ENCODE measurements at regions of chr18 and their contacts with region 1.

Region 1: GRCh38 chr18:23231340-23232021 is 96.2 kb downstream of the CABLES1 start:
- DNase-seq: peak; percentile 58
- ATAC-seq: peak; percentile 75
- H3K4me3 Mint-ChIP-seq: peak overlapping the region; percentile 76
- H3K27ac Mint-ChIP-seq: peak overlapping the region; percentile 97
- H3K4me1 Mint-ChIP-seq: peaks cover 74% of the 10 kb centered on the region
- H3K27me3 Mint-ChIP-seq: no peaks in the 10 kb centered on the region
- CTCF ChIP-seq: no peak

Region 2: DNA sequence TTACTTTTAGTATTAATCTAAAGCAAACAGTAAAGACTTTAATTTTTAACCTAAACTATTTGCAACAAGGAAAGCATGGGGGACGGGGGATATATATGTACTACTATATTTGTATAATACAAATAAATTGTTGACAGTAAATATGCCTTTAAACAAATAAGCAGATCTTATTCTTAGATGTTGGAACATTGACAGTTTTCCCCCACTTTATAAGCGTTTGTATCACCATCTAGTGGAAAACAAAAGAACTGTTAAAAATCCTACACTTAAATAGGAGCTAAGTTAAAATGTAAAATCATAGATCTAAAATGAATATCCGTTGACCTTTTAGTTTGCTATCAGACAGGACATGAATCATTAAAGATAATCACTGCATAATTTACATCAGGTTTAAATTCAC is 248.3 kb before region 1 on chr18:
- CTCF ChIA-PET with region 1: no interaction called
- POLR2A ChIA-PET with region 1: no interaction called
- intact Hi-C with region 1: loop called (anchors 5 kb)
- DNase-seq: no peak
- ATAC-seq: no peak
- H3K4me3 Mint-ChIP-seq: no peak overlapping the region
- H3K27ac Mint-ChIP-seq: no peak overlapping the region
- H3K4me1 Mint-ChIP-seq: peaks cover 34% of the 10 kb centered on the region
- H3K27me3 Mint-ChIP-seq: no peaks in the 10 kb centered on the region
- CTCF ChIP-seq: no peak

Region 3: GRCh38 chr18:23243178-23243577 is 11.7 kb after region 1 on chr18:
- CTCF ChIA-PET with region 1: interaction called, 5 read pairs
- POLR2A ChIA-PET with region 1: interaction called, 27 read pairs
- intact Hi-C with region 1: loop called (anchors 1 kb)
- DNase-seq: no peak
- ATAC-seq: no peak
- H3K4me3 Mint-ChIP-seq: no peak overlapping the region
- H3K27ac Mint-ChIP-seq: no peak overlapping the region
- H3K4me1 Mint-ChIP-seq: peaks cover 34% of the 10 kb centered on the region
- H3K27me3 Mint-ChIP-seq: no peaks in the 10 kb centered on the region
- CTCF ChIP-seq: no peak

Region 4: DNA sequence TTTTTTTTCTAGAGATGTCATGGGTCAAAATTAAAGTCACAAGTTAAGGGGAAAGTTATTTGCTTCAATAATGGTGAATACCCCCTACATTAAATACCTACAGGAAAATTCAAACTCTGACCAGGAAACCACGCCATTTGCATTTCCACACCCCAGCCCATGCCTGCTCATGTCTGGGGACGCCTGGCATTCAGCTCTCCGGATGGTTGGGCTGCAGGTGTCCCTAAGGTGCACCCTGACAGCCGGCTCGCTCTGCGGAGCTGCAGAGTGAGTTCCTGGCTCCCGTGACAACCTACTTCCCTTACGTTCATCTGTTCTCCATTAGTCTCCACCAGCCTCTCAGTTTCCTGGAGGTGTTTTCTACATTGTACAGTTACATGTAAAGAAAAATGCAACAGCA is 98.9 kb after region 1 on chr18:
- CTCF ChIA-PET with region 1: no interaction called
- POLR2A ChIA-PET with region 1: no interaction called
- intact Hi-C with region 1: loop called (anchors 1 kb)
- DNase-seq: peak; percentile 29
- ATAC-seq: peak; percentile 96
- H3K4me3 Mint-ChIP-seq: peak overlapping the region; percentile 47
- H3K27ac Mint-ChIP-seq: peak overlapping the region; percentile 50
- H3K4me1 Mint-ChIP-seq: peaks cover 28% of the 10 kb centered on the region
- H3K27me3 Mint-ChIP-seq: no peaks in the 10 kb centered on the region
- CTCF ChIP-seq: no peak

Region 5: GRCh38 chr18:23377669-23378301 is 146.3 kb after region 1 on chr18:
- CTCF ChIA-PET with region 1: no interaction called
- POLR2A ChIA-PET with region 1: no interaction called
- intact Hi-C with region 1: loop called (anchors 5 kb)
- DNase-seq: no peak
- ATAC-seq: peak; percentile 50
- H3K4me3 Mint-ChIP-seq: no peak overlapping the region
- H3K27ac Mint-ChIP-seq: no peak overlapping the region
- H3K4me1 Mint-ChIP-seq: peaks cover 8% of the 10 kb centered on the region
- H3K27me3 Mint-ChIP-seq: no peaks in the 10 kb centered on the region
- CTCF ChIP-seq: no peak

Region 6: DNA sequence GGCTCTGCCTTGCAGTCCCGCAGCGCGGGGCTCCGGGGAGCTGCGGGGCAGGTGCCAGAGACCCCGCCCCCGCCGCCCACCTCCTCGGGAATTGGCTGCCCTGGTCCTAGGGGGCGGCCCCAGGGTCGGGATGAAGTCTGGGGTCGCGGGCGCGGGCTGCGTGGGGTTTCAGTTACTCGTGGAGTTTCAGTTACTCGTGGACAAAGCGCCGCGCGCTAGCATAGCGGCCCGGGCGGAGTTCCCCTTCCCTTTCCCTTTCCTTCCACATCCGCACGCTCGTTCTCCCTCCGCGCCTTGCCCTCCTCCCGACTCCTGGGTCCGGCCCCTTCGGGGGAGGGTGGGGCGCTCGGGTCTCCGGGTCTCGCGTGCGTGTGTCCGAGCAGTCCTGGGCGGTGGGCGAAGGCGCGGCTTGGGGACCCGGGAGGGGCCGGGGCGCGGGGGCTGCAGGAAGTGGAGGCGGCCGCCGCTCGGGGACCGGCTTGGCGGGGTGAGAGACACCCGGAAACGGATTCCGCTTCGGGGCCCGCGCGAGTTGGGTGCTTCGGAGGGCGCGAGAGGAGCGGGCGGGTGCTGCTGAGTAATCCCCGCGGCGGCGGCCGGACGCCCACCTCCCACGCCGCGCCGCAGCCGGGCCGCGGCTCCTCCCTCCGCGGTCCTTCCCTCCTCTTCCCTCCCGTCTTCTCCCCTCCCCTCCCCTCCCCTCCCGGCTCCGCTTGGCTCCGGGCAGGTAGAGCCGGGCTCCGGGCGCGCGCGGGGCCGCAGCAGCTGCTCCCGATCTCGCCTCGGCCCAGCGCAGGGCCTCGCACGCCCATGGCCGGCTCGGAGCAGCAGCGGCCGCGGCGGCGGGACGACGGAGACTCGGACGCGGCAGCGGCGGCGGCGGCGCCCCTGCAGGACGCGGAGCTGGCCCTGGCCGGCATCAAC is 782.8 kb after region 1 on chr18 and contains the start of gene TTC39C:
- CTCF ChIA-PET with region 1: no interaction called
- POLR2A ChIA-PET with region 1: interaction called, 3 read pairs
- intact Hi-C with region 1: loop called (anchors 5 kb)
- DNase-seq: peak; percentile 76
- ATAC-seq: peak; percentile 66
- H3K4me3 Mint-ChIP-seq: peak within 1 kb of the TSS; percentile 89
- H3K27ac Mint-ChIP-seq: peak within 1 kb of the TSS; percentile 83
- H3K4me1 Mint-ChIP-seq: peaks cover 84% of the 10 kb centered on the region
- H3K27me3 Mint-ChIP-seq: no peaks in the 10 kb centered on the region
- CTCF ChIP-seq: no peak
- total RNA-seq, gene TTC39C: 60.6 and 68.4 TPM in 2 replicates

Measured in activated B cell treated with CpG ODN at 0.5 μM for 24 hours (primary cell).